Activated CD4-positive, alpha-beta T cell treated with anti-CD3 and anti-CD28 coated beads for 36 hours (primary cell): ENCODE measurements at regions of chr12 and their contacts with region 1.

Region 1: DNA sequence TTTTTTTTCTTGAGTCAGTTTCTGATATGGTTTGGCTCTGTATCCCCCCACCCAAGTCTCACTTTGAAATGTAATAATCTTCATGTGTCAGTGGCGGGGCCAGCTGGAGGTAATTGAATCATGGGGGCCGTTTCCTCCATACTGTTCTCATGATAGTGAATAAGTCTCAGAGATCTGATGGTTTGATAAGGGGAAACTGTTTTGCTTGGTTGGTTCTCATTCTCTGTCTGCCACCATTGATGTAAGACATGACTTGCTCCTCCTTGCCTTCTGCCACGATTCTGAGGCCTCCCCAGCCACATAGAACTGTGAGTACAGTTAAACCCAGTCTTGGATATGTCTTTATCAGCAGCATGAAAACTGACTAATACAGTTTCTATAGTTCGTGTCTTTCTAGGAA is 42.9 kb downstream of the WNK1 start:
- DNase-seq: peak; percentile 86
- ATAC-seq: peak; percentile 90
- H3K4me3 Mint-ChIP-seq: peak overlapping the region; percentile 56
- H3K27ac Mint-ChIP-seq: peak overlapping the region; percentile 85
- H3K4me1 Mint-ChIP-seq: peaks cover 84% of the 10 kb centered on the region
- H3K27me3 Mint-ChIP-seq: no peaks in the 10 kb centered on the region

Region 2: DNA sequence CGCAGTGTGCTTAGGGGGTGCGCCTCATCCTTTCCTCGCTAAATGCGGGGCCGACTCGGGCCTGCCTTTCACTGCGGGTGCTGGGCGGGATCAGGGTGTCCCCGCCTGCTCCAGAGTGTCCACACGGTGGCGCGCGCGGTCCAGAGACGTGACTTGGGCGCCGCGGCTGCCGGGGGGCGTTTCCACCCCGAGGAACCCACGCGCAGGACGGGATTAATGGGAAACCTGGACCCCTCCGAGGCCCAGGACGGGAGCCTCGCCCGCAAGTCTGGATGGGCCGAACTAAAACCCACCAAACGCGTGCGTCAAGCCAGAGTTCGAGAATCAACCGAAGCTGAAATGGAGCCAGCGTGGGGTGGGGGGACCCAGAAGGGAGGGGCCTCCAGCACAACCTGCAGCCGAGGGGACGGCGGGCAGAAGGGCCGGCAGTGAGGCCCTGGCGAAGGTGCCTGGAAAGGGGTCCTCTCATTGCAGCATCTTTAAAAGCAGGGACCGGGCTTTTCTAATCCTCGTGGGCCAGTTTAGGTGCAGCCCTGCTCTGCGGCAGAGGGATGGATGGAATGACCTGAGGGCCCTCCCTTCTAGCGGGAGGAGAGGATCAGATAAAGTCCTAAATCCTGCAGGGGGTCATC is 225.4 kb before region 1 on chr12:
- CTCF ChIA-PET with region 1: no interaction called
- POLR2A ChIA-PET with region 1: no interaction called
- intact Hi-C with region 1: loop called in 1 of 2 experiments (anchors 5 kb)
- DNase-seq: peak; percentile 94
- ATAC-seq: peak; percentile 89
- H3K4me3 Mint-ChIP-seq: peak overlapping the region; percentile 74
- H3K27ac Mint-ChIP-seq: peak overlapping the region; percentile 85
- H3K4me1 Mint-ChIP-seq: peaks cover 65% of the 10 kb centered on the region
- H3K27me3 Mint-ChIP-seq: no peaks in the 10 kb centered on the region

Region 3: GRCh38 chr12:674272-674781 is 121.0 kb before region 1 on chr12:
- CTCF ChIA-PET with region 1: interaction called, 3 read pairs
- POLR2A ChIA-PET with region 1: no interaction called
- intact Hi-C with region 1: loop called (anchors 1 to 2 kb)
- DNase-seq: peak; percentile 90
- ATAC-seq: peak; percentile 95
- H3K4me3 Mint-ChIP-seq: peak overlapping the region; percentile 59
- H3K27ac Mint-ChIP-seq: peak overlapping the region; percentile 92
- H3K4me1 Mint-ChIP-seq: peaks cover 82% of the 10 kb centered on the region
- H3K27me3 Mint-ChIP-seq: peaks cover 2% of the 10 kb centered on the region

Region 4: GRCh38 chr12:724194-724855 is 71.0 kb before region 1 on chr12:
- CTCF ChIA-PET with region 1: interaction called, 3 read pairs
- POLR2A ChIA-PET with region 1: no interaction called
- intact Hi-C with region 1: loop called in 1 of 2 experiments (anchors 2 kb)
- DNase-seq: peak; percentile 37
- ATAC-seq: peak; percentile 65
- H3K4me3 Mint-ChIP-seq: peak overlapping the region; percentile 3
- H3K27ac Mint-ChIP-seq: peak overlapping the region; percentile 87
- H3K4me1 Mint-ChIP-seq: peaks cover 85% of the 10 kb centered on the region
- H3K27me3 Mint-ChIP-seq: no peaks in the 10 kb centered on the region

Region 5: DNA sequence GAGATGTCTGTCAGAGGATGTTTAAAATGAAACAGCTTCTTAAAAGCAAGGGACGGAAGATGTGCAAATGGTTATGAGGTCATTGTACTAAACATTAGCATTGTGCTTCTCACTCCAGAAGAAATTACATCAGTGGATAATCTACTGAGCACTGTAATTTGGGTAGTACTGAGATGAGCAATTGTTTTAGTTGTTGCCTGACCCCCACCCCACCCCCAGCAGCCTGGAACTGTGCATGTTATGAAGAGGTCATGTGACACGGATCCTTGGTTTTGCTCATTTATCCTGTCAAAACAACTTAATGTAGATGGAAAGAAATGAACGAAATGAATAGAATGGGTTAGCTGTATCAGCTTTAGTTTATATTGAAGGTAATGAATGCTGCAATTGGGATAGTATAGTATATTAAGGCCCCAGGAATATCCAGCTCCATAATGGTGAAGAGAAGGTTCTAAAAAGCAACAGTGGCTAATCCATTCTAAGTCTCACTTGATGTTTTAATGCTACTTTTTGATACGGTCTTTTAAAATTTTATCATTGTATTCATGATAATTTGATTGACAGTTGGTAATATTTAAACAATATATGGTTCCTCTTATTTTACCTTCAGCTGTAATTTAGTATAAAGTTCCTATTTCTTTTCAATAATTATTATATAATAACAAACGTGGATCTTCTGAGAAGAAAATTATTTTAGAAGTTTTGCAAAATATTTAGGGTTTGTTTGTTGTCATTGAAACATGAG is 15.5 kb after region 1 on chr12:
- CTCF ChIA-PET with region 1: interaction called, 6 read pairs
- POLR2A ChIA-PET with region 1: no interaction called
- intact Hi-C with region 1: loop called (anchors 1 to 2 kb)
- DNase-seq: peak; percentile 84
- ATAC-seq: peak; percentile 95
- H3K4me3 Mint-ChIP-seq: peak overlapping the region; percentile 32
- H3K27ac Mint-ChIP-seq: peak overlapping the region; percentile 78
- H3K4me1 Mint-ChIP-seq: peaks cover 68% of the 10 kb centered on the region
- H3K27me3 Mint-ChIP-seq: no peaks in the 10 kb centered on the region

Region 6: DNA sequence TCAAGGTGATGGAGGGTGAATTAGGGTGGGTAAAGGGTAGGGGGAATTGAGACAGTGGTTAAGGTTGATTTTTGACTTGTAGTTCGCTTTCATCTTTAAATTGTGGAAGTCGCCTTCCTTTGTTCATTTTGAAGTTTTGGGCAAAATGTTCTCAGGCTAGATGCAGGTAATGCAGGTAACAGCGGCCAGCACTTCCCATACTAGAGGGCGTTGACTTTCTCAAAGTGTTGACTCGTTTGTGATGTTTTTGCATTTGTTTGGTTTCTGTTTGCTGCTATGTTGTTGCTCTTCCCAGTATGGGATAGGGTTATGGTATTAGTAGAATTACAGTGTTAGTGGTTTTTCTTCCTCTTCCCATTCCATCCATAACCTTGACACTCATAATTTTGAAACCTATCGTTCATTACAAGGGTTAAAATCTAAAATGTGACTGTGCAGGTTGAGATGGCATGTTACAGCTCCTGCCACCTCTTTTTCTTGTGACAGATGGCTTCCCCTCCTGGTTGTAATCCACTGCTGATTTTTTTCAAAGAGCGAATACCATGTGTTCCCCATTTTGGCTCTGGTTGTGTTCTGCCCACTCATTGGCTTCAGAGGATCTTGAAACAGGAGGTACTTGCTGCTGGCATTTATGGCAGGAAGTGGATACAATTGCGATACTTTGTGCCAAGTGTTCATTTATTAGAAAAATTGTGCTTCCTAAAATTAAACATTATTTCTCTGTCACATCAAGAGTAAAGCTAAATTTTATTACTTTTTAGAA is 252.8 kb after region 1 on chr12:
- CTCF ChIA-PET with region 1: no interaction called
- POLR2A ChIA-PET with region 1: no interaction called
- intact Hi-C with region 1: no loop called
- DNase-seq: no peak
- ATAC-seq: no peak
- H3K4me3 Mint-ChIP-seq: no peak overlapping the region
- H3K27ac Mint-ChIP-seq: no peak overlapping the region
- H3K4me1 Mint-ChIP-seq: peaks cover 14% of the 10 kb centered on the region
- H3K27me3 Mint-ChIP-seq: no peaks in the 10 kb centered on the region

Region 7: GRCh38 chr12:1093166-1093751 is 298.0 kb after region 1 on chr12:
- CTCF ChIA-PET with region 1: no interaction called
- POLR2A ChIA-PET with region 1: no interaction called
- intact Hi-C with region 1: loop called in 1 of 2 experiments (anchors 5 kb)
- DNase-seq: peak; percentile 46
- ATAC-seq: peak; percentile 71
- H3K4me3 Mint-ChIP-seq: no peak overlapping the region
- H3K27ac Mint-ChIP-seq: no peak overlapping the region
- H3K4me1 Mint-ChIP-seq: peaks cover 27% of the 10 kb centered on the region
- H3K27me3 Mint-ChIP-seq: no peaks in the 10 kb centered on the region